IMR-90 (cell line): ENCODE measurements at regions of chr12 and their contacts with region 1.

Region 1: DNA sequence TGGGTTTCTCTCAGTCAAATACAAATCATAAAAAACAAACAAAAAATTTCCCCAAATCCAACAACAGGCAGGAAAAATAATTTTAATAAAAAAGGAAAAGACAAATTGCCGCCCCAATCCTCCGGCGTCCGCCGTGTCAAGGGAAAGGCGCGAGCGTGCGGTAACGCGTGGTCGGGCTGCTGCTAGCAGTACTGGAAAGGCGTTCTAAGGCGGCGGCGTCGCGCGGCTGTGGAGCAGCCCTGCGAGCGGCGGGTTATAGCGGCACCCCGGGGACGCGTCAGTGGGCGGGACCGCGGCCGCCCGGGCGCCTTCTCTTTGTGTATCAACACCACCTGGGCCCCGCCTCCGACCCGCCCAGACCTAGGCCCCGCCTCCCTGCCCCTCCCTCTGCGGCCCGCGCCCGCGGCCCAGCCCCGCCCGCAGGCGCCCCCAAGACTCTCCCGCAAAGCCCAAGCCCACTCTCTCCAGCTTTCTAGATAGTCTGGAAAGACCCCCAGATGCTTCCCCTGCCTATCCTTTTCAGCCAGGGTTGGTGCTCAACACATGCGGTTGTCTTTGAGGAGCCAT is at the start of gene SLC38A2:
- DNase-seq: peak; percentile 90
- ATAC-seq: peak; percentile 83
- H3K4me3 ChIP-seq: peak within 1 kb of the TSS; percentile 82
- H3K27ac ChIP-seq: peak within 1 kb of the TSS; percentile 94
- H3K4me1 ChIP-seq: peaks cover 10% of the 10 kb centered on the region
- H3K27me3 ChIP-seq: no peaks in the 10 kb centered on the region
- CTCF ChIP-seq: no peak
- POLR2A ChIP-seq: peak; percentile 100
- RAD21 ChIP-seq: peak; percentile 47
- total RNA-seq, gene SLC38A2: 881 and 1,389 TPM in 2 replicates

Region 2: GRCh38 chr12:46382964-46383653 is 10.5 kb after region 1 on chr12:
- CTCF ChIA-PET with region 1: no interaction called
- POLR2A ChIA-PET with region 1: interaction called, 4 read pairs
- dilution Hi-C with region 1: no loop called
- in situ Hi-C with region 1: no loop called
- intact Hi-C with region 1: loop called (anchors 1 kb)
- DNase-seq: peak; percentile 97
- ATAC-seq: peak; percentile 81
- H3K4me3 ChIP-seq: peak overlapping the region; percentile 69
- H3K27ac ChIP-seq: peak overlapping the region; percentile 98
- H3K4me1 ChIP-seq: peaks cover 17% of the 10 kb centered on the region
- H3K27me3 ChIP-seq: no peaks in the 10 kb centered on the region
- CTCF ChIP-seq: no peak
- POLR2A ChIP-seq: no peak
- RAD21 ChIP-seq: no peak

Region 3: DNA sequence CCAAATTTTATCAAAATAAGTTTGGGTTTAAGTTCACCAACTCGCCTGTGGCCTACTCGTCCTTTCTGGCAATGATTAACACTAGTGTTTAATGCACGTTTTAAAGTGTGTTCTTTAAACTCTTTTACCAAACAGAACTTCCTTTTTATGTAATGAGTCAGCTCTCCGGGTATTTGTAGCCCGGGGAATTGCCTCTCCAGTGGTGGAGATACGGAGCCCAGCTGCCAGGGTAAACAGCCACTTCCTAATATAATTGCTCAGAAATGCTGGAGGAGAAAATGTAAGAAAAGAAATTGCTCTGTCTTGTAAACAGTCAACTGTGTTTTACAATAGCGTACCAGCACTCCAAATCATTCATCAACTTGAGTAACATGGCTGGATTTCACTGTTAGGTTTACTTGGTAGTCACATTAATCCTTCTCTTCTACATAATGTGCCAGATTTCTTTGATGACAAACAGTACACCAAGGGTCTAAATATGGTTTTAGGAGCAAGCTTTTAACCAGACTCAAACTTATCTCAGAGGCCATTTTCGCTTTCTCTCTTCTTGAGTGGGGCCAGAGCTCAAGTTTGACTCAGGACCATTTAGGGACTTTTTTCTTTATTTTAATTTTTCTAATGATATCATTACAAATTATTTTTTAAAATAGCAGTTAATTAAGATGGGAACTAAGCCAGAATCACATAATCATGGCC is 101.2 kb after region 1 on chr12:
- CTCF ChIA-PET with region 1: no interaction called
- POLR2A ChIA-PET with region 1: interaction called, 5 read pairs
- dilution Hi-C with region 1: no loop called
- in situ Hi-C with region 1: no loop called
- intact Hi-C with region 1: loop called (anchors 5 kb)
- DNase-seq: peak; percentile 94
- ATAC-seq: peak; percentile 81
- H3K4me3 ChIP-seq: peak overlapping the region; percentile 9; the same call in 1 of the 2 replicates
- H3K27ac ChIP-seq: peak overlapping the region; percentile 87
- H3K4me1 ChIP-seq: peaks cover 24% of the 10 kb centered on the region
- H3K27me3 ChIP-seq: no peaks in the 10 kb centered on the region
- CTCF ChIP-seq: no peak
- POLR2A ChIP-seq: no peak
- RAD21 ChIP-seq: peak; percentile 40

Region 4: DNA sequence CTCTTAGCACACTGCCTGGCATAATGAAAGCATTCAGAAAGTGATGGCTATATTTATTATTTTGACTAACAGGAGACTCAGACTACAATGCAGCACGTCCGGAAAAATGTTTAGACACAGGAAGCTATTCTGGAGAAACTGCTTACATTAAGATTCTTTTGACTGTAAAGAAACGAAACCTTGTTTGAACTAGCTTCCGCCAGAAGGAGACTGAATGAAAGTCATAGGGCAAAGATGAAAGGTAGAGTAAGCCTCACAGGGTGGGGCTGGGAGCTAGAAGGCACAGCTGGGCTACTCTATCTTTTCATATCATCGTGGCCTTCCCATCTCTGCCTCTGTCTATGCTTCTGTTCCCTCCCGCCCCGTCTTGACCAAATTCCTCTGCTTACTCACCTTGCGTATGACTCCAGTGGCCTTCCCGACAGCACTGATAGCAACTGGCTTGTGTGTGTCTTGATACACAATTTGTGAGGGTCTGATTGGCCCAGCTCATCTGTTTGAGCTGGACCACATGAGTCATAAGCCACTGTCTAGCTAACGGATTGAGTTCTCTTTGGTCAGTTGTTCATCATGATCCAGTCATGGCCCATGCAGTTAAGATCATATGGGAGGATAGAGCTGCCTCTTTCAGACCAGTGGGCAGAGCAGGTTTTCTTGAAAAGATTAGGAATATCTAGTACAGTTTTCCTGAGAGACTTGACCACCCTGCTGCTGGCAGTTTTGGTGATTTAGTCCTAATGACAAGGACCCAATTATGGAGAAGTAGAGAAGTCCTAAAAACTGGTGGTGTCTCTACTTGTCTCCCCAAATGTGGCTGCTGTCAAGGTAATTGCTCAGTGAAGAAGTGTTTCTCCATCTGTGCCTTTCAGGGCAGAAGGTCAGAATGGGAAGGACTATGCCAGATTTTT is 151.5 kb after region 1 on chr12:
- CTCF ChIA-PET with region 1: no interaction called
- POLR2A ChIA-PET with region 1: interaction called, 15 read pairs
- dilution Hi-C with region 1: no loop called
- in situ Hi-C with region 1: no loop called
- intact Hi-C with region 1: loop called (anchors 2 kb)
- DNase-seq: peak; percentile 100
- ATAC-seq: peak; percentile 82
- H3K4me3 ChIP-seq: peak overlapping the region; percentile 47
- H3K27ac ChIP-seq: peak overlapping the region; percentile 94
- H3K4me1 ChIP-seq: peaks cover 25% of the 10 kb centered on the region
- H3K27me3 ChIP-seq: no peaks in the 10 kb centered on the region
- CTCF ChIP-seq: no peak
- POLR2A ChIP-seq: peak; percentile 83
- RAD21 ChIP-seq: peak; percentile 21; the same call in 1 of the 2 replicates

Region 5: DNA sequence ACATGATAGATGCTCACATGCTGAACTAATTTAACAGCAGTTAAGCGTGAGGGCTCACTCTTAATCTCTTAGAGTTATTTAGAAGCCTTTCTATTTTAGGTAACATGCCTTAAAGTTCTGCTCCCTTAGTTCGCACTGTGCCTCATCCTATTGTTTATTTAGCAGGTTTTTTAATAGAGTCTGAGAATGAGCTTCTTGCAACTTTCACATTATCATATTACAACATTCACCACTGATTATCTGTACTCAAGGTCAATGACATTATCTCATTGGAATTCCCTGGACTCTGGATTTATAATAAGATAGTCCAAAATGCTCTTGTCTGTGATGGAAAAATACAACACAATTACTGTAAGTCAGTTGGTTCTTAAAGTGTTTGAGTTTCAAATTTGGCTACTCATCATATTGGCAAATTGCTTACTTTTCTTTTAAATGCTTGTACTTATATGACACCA is 183.5 kb after region 1 on chr12:
- CTCF ChIA-PET with region 1: interaction called, 3 read pairs
- POLR2A ChIA-PET with region 1: interaction called, 4 read pairs
- dilution Hi-C with region 1: no loop called
- in situ Hi-C with region 1: loop called (anchors 10 kb)
- intact Hi-C with region 1: no loop called
- DNase-seq: peak; percentile 99
- ATAC-seq: peak; percentile 73
- H3K4me3 ChIP-seq: peak overlapping the region; percentile 10; the same call in 1 of the 2 replicates
- H3K27ac ChIP-seq: peak overlapping the region; percentile 97; the same call in 1 of the 2 replicates
- H3K4me1 ChIP-seq: peaks cover 15% of the 10 kb centered on the region
- H3K27me3 ChIP-seq: no peaks in the 10 kb centered on the region
- CTCF ChIP-seq: no peak
- POLR2A ChIP-seq: no peak
- RAD21 ChIP-seq: peak; percentile 26; the same call in 1 of the 2 replicates

Region 6: DNA sequence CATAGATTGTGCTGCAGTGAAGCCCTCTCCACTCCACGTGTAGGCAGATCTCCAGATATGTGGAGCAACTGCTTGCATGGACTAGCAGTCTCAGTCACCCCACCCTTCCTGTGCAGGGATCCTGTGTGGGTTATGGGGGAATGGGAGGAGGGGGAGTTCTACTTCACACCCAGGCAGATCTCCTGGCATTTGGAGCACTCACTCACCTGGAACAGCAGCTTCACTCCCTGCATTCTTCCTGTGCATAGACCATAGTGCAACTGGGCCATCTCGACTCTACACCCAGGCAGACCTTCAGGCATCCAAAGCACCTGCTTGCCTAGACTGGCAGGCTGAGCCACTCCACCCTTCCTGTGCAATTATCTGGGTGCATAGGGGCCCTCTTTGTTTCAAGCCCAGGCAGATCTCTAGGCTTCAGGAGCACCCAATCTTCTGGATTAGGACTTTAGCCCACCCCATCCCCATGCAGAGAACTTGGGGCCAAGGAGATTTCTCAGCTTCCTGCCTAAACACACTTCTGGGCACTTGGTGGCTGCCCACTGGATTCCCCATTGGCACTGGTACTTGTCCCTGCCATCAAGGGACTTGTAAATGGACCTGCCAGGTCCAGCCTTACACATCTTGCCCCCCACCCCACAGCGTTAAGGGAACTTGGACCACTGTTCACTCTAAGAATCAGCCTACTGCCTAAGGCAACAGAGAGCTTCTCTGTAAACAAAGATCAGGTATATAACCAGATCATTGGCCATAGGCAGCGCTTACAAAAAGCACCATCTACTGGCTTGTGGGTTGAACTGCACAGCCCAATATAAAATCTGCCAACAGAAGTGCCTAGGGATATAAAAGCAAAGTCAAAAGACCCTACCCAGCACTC is 611.0 kb after region 1 on chr12:
- CTCF ChIA-PET with region 1: no interaction called
- POLR2A ChIA-PET with region 1: no interaction called
- dilution Hi-C with region 1: no loop called
- in situ Hi-C with region 1: no loop called
- intact Hi-C with region 1: loop called (anchors 5 kb)
- DNase-seq: peak; percentile 75
- ATAC-seq: peak; percentile 98
- H3K4me3 ChIP-seq: no peak overlapping the region
- H3K27ac ChIP-seq: no peak overlapping the region
- H3K4me1 ChIP-seq: no peaks in the 10 kb centered on the region
- H3K27me3 ChIP-seq: no peaks in the 10 kb centered on the region
- CTCF ChIP-seq: peak; percentile 85
- POLR2A ChIP-seq: no peak
- RAD21 ChIP-seq: peak; percentile 89